Activated T-helper 2 cell treated with anti-CD3 and anti-CD28 coated beads, Interferon-gamma antibody, Interleukin-2, Interleukin-4, amounts not matched to agents 10 μg/mL and 5 μg/mL and 100 μg/mL, durations not matched to agents 14 hours and 24 hours and 36 hours (primary cell): ENCODE measurements at regions of chr3 and their contacts with region 1.

Region 1: GRCh38 chr3:60555684-60556354 is 695.4 kb downstream of the FHIT start:
- DNase-seq: no peak
- H3K4me3 Mint-ChIP-seq: no peak overlapping the region
- H3K27ac Mint-ChIP-seq: no peak overlapping the region
- H3K4me1 Mint-ChIP-seq: peaks cover 34% of the 10 kb centered on the region
- H3K27me3 Mint-ChIP-seq: no peaks in the 10 kb centered on the region

Region 2: GRCh38 chr3:59873576-59874230 is 682.1 kb before region 1 on chr3:
- intact Hi-C with region 1: loop called (anchors 10 kb)
- DNase-seq: no peak
- H3K4me3 Mint-ChIP-seq: no peak overlapping the region
- H3K27ac Mint-ChIP-seq: peak overlapping the region; percentile 9
- H3K4me1 Mint-ChIP-seq: peaks cover 52% of the 10 kb centered on the region
- H3K27me3 Mint-ChIP-seq: no peaks in the 10 kb centered on the region

Region 3: DNA sequence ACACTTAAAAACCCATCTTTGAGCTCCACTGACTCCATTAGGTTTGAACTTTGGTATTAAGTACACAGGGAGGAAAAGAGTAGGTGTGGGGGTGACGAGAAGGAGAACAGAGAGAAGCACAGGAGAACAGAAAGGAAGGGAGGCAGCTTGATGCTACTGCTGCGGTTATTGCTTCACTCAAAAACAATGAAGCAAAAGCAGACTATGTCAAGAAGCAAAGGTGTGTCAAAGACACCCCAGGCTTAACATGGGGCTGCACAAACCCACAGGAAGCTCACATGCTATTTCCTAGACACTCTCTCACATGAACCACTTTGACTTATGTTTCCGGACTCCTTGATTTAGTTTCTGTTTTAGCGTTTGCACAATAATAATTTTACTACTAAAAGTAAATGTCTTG is 545.0 kb before region 1 on chr3:
- intact Hi-C with region 1: loop called (anchors 10 kb)
- DNase-seq: peak; percentile 72
- H3K4me3 Mint-ChIP-seq: peak overlapping the region; percentile 49
- H3K27ac Mint-ChIP-seq: peak overlapping the region; percentile 85
- H3K4me1 Mint-ChIP-seq: peaks cover 67% of the 10 kb centered on the region
- H3K27me3 Mint-ChIP-seq: no peaks in the 10 kb centered on the region

Region 4: DNA sequence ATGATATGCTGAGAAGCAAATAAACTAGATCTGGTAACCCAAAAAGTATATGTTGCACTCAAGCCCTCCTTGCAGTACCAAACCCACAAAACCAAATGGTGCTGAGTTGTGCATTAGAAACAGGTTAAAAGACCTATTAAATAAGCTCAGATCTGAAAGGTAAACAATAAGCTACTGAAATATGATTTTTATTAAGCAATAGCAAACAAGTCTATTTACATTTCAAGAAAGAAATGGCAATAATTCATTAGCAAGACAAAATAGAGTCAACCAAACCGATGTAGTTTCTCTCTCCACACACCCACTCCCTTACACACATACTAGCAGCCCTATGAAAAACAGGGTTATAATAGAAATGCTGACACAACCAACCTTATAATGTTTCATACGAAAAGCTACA is 64.8 kb before region 1 on chr3:
- intact Hi-C with region 1: no loop called
- DNase-seq: no peak
- H3K4me3 Mint-ChIP-seq: no peak overlapping the region
- H3K27ac Mint-ChIP-seq: no peak overlapping the region
- H3K4me1 Mint-ChIP-seq: peaks cover 3% of the 10 kb centered on the region
- H3K27me3 Mint-ChIP-seq: peaks cover 2% of the 10 kb centered on the region